AG04449 (cell line): ENCODE measurements at regions of chr5 and their contacts with region 1.

Region 1: DNA sequence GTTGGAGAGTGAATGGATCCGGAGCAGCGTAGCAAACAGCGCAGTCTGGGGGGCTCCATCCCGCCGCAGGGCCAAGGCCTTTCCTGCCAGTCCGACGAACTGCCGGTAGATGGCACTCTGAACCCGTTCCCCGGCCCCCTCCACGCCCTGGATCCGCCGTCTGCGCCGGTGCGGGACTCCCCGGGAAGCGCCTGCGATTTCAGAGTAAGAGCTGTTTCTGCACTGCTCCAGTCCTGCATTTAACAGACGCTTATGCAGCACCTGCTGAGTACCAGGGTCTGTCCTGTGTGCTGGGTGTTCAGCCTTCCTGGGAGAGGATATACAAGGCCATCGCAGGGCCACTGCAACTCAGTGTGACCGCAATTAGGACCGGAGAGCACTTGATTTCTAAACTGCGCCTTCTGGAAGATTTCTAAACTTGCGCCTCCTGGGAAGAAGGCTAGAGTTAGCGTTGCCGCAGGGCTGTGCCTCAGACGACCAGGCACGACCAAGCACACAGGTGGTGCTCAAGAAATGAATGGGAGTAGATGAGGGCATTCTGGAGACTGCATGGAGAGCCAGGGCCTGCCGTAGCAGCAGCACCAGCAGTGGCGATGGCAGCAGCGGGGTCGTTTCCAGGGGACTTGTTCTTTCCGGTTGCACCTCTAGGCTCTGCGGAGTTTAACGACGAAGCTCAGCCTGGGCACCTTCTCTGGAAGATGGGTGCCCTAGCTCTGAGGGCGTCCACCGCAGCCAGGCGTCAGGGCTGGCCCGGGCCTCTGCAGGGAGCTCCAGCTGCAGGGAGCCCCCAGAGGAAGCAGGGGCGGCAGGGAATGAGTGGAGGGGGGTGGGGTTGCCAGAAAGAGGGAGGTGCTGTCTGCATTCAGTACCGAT is 14.3 kb upstream of the TIFAB start:
- DNase-seq: no peak
- H3K4me3 ChIP-seq: no peak overlapping the region
- CTCF ChIP-seq: peak; percentile 96

Region 2: DNA sequence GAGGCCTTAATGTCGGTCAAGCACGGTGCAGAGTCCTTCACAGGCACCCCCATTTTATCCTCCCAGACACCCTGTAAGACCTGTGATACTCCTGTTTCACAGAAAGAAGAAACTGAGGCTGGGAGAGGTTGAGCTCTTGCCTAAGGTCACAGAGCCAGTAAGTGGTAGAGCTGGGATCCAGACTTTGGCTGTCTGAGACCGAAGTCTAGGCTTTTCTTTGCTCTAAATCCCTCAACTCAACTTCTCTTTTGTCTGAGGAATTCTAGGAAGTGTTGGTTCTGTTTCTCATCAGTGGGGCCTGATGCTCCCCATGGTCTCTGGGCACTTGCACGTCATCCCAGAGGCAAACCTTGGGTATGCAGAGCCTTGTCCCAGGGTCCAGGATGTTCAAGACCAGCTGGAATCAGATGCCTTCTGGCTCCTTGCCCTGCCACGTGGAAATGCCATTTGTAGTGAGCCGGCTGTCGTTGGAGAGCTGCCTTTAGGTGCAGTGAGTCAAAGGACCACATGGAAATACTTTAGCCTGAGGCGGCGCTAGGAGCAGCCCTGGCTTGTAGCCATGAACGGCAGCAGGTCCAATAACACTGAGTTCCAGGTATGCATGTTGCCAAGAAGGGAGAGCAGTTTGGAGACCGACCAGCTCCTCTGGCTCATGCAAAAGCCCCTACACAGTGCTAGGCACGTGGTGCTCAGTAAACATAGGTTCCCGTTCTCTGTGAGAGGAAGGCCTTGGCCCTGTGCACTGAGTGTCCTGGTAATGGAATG is 28.4 kb before region 1 on chr5:
- CTCF ChIA-PET with region 1: interaction called, 121 read pairs
- POLR2A ChIA-PET with region 1: no interaction called
- DNase-seq: peak; percentile 68
- H3K4me3 ChIP-seq: no peak overlapping the region
- CTCF ChIP-seq: no peak

Region 3: DNA sequence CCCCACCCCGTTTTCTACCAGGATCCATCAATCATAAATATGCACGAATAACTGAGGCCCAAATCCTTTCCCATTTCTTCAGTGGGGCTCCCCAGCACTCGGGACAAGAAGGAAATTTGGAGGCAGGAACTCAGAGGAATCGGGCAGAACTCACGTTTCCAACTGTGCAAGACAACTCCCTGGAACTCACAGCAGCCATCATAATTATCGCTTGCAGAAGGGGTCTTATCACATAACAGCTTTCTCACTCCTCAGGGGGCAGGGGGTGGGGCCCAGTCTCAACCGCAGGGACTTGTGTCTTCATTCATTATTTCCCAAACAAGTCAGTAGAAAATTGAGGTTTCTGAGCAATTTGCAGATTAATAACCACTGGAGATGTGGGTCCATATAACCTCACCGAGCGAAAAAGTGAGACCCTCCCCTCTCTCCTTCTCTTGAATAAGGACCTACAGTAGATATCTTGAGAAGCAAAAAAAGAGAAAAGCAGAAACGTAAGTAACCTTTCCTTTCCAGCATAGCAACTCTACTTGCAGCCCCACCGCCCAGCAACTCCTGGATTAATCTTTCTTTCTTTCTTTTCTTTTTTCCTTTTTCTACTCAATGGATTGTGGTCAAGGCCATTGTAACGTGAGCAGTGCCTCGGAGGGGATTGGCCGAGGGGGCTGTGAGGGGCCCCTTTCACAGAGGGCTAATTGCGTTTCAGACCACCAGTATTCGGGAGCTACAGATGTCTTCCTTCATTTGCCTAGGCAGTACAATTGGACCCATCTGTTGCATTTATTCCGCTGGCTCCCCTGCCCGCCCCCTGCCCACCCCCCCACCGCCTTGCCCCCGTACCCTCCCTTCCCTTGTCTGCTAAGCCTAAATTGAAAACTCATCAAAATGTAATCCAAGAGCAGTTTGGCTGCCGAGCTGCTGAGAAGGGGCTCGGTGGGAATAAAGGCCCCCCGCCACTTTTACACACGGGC is 10.5 kb after region 1 on chr5:
- CTCF ChIA-PET with region 1: interaction called, 114 read pairs
- POLR2A ChIA-PET with region 1: no interaction called
- DNase-seq: no peak
- H3K4me3 ChIP-seq: no peak overlapping the region
- CTCF ChIP-seq: no peak

Region 4: DNA sequence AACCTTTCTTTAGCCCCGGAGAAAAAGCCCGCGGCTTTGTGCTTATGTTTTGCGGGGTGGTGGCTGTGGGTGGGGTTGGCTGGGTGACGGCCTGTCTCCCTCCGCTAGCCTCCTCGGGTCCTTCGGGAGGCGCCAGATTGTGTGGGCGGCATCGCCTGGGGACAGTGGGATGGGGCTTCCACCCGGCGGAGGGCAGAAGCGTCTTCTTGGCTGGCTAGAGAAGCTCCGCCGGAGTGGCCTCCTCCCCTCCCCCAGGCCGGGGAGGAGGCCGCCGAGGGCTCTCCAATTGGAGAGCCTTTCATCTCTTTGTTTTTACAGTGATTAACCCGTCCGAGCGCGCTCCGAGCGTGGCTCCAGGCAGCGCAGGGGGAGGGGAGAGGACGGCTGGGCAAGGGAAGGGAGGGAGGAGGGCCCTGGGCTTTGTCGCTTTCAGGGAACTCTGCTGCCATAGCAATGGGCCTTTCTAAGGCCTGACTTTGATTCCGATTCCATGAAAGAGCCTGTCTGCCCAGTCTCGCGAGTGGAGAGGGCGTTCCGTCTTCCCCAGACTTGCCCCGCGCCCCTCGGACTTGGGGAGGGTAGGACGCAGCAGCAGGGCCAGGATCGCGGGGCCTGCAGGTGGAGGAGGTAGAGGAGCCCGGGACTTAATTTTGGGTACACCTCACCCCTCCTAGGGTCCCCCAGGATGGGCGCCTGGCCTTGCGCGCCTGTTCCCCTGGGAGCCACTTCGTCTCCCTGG is 22.5 kb after region 1 on chr5:
- CTCF ChIA-PET with region 1: interaction called, 48 read pairs
- POLR2A ChIA-PET with region 1: no interaction called
- DNase-seq: no peak
- H3K4me3 ChIP-seq: peak overlapping the region; percentile 56
- CTCF ChIP-seq: no peak

Region 5: GRCh38 chr5:135535820-135536801 is 69.7 kb after region 1 on chr5 and contains the start of gene NEUROG1:
- CTCF ChIA-PET with region 1: interaction called, 39 read pairs
- POLR2A ChIA-PET with region 1: no interaction called
- DNase-seq: no peak
- H3K4me3 ChIP-seq: no peak within 1 kb of the TSS
- CTCF ChIP-seq: no peak

Region 6: DNA sequence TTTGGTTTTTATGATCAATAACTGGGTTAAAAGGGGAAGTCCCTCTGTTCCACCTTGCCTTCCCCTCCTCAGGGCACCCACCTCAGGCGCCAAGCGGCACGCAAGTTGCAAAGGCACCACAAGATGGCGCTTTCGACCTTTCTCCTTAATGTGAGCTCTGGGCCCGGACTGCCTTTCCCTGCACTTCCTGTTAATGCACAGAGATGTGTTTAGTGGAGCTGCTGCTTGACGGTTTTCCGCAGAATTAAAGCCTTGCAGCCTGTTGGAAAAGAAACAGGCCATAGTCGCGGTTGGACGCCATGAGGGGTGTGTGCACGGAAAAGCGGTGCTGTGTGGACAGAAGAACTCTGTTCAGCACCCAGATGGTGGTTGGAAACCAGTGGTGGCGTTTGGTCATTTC is 94.4 kb after region 1 on chr5:
- CTCF ChIA-PET with region 1: interaction called, 2,422 read pairs
- POLR2A ChIA-PET with region 1: interaction called, 3 read pairs
- DNase-seq: peak; percentile 24
- H3K4me3 ChIP-seq: no peak overlapping the region
- CTCF ChIP-seq: peak; percentile 91

Region 7: DNA sequence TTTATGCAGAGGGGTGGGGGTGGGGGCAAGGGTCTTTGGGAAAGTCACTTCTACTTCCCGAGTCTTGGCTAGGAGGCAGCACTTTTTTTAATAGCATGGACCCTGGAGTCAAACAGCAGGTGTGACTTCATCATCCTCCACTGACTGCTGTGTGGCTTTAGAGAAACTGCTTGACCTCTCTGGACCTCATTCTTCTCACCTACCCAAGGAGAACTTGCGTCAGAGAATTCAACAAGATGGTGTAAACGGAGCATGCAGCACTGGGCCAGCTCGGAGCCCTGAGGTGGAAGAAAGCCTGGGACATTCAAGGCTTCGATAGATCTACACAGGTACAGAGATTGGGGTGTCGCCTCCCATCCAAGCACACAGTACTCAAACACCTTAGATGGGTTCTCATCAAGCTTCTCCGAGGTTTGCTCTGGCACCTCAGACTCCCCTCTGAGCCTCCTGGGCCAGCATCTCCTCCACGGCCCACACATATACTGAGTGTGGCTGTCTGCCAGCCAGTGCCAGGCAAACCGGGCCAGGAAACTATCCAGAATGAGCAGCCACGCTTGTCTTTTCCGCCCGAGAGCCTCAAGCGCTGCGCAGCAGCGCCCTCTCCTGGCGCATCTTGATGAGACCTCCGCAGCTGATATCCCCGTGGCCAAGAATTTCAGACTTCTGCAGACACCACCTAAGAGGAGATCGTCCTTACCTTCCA is 363.4 kb after region 1 on chr5:
- CTCF ChIA-PET with region 1: interaction called, 31 read pairs
- POLR2A ChIA-PET with region 1: no interaction called
- DNase-seq: no peak
- H3K4me3 ChIP-seq: no peak overlapping the region
- CTCF ChIP-seq: peak; percentile 72